Endothelial cell of umbilical vein (primary cell): ENCODE measurements at regions of chr2 and their contacts with region 1.

Region 1: DNA sequence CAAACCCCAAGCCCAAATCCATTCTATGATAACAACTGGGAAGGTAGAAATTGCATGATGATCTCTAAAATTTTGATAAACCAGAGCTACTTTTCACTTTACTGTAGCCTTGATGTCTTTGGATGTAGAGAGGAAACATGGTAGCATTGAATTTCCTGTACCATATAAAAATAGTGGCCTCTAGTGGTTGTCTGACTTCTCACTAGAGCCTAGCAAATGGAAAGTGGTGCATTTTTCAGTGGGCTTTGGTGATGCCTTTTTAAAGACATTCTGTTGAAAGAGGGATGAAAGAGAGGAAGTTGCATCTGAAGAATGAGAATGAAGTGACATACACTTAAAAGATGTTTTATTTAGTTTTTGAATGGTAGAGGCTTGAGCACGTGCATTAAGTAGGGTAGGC is 662.2 kb downstream of the XIRP2 start:
- DNase-seq: peak; percentile 35
- H3K4me3 ChIP-seq: no peak overlapping the region
- H3K27ac ChIP-seq: no peak overlapping the region
- H3K4me1 ChIP-seq: no peaks in the 10 kb centered on the region
- H3K27me3 ChIP-seq: no peaks in the 10 kb centered on the region
- CTCF ChIP-seq: peak; percentile 14 to 40
- POLR2A ChIP-seq: no peak

Region 2: GRCh38 chr2:167264380-167264779 is 286.1 kb before region 1 on chr2:
- CTCF ChIA-PET with region 1: interaction called, 11 read pairs
- POLR2A ChIA-PET with region 1: no interaction called
- dilution Hi-C with region 1: no loop called
- intact Hi-C with region 1: loop called (anchors 1 kb)
- DNase-seq: peak; percentile 25
- H3K4me3 ChIP-seq: no peak overlapping the region
- H3K27ac ChIP-seq: no peak overlapping the region
- H3K4me1 ChIP-seq: no peaks in the 10 kb centered on the region
- H3K27me3 ChIP-seq: no peaks in the 10 kb centered on the region
- CTCF ChIP-seq: no peak
- POLR2A ChIP-seq: no peak

Region 3: GRCh38 chr2:167342769-167343168 is 207.7 kb before region 1 on chr2:
- CTCF ChIA-PET with region 1: no interaction called
- POLR2A ChIA-PET with region 1: no interaction called
- dilution Hi-C with region 1: no loop called
- intact Hi-C with region 1: loop called (anchors 2 kb)
- DNase-seq: peak; percentile 13
- H3K4me3 ChIP-seq: no peak overlapping the region
- H3K27ac ChIP-seq: no peak overlapping the region
- H3K4me1 ChIP-seq: no peaks in the 10 kb centered on the region
- H3K27me3 ChIP-seq: no peaks in the 10 kb centered on the region
- CTCF ChIP-seq: peak in 1 of 2 donors; percentile 2
- POLR2A ChIP-seq: no peak

Region 4: DNA sequence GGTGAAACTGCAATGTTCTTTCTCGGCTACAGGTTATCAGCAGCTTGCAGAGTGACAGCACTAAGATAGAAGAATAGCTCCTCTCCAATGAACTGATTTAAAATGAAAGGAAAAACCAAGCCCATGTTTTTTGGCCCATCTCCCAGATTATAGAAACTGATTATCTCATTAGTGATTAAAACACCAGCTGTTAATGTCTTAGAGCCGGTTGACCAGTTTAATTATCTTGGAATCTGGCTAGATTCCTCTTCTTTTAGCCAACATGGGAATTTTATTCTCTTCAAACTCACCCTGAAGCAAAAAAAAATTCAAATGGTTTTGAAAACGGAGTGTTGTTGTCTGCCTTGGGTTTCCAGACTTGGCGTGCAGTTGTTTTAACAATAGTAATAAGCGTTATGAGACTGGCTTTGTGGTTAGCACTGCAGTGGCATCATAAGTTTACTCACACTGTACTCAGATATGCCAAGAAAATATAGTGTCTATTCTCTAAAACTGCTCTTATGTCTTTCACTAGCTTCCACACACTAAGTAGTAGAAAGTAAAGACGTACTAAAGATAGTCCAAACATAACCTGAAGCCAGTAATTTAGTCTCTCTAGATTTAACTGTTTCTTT is 31.6 kb after region 1 on chr2:
- CTCF ChIA-PET with region 1: no interaction called
- POLR2A ChIA-PET with region 1: no interaction called
- dilution Hi-C with region 1: no loop called
- intact Hi-C with region 1: no loop called
- DNase-seq: no peak
- H3K4me3 ChIP-seq: no peak overlapping the region
- H3K27ac ChIP-seq: no peak overlapping the region
- H3K4me1 ChIP-seq: no peaks in the 10 kb centered on the region
- H3K27me3 ChIP-seq: no peaks in the 10 kb centered on the region
- CTCF ChIP-seq: no peak
- POLR2A ChIP-seq: no peak